Mammary epithelial cell (primary cell): ENCODE measurements at regions of chr7 and their contacts with region 1.

Region 1: DNA sequence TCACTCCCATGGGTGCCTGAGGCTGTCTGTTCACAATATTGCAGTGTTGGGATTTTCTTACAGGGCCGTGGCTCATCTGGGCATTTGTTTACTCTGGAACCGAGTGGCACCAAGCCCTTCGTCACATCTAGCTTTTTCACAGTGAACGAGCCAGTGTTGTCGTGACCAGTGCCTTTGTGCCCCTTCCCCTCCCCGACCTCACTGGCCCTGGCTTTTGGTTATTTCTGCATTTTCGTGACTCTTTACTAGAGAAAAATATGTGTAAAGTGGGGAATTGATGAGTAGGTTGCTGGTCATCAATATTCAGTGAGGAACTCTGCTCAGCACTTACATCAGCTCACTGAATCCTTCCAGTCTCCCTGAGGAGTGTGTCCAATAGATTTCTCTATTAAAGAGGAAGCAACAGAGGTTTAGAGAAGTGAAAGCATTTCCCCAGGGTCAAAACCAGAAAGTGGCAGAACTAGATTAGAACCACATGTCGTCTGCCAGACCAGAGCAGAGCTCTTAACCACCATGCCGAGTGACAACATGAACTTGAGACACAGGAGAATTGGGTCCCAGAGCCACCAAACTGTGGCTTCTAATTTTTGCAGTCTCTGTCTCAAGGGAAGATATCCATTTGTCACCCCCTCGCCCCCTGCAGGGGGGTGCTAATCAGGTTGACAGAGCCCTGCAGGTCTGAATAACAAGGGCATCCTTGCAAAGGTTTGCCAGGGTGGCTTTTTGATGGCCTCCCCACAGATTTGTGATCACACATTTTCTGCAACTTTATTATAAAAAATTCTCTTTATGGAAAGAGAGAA is 125.3 kb downstream of the CHN2 start:
- DNase-seq: no peak
- H3K4me3 ChIP-seq: no peak overlapping the region
- H3K27ac ChIP-seq: no peak overlapping the region
- H3K4me1 ChIP-seq: no peaks in the 10 kb centered on the region
- H3K27me3 ChIP-seq: no peaks in the 10 kb centered on the region
- CTCF ChIP-seq: no peak

Region 2: GRCh38 chr7:28768628-28769027 is 551.3 kb before region 1 on chr7:
- CTCF ChIA-PET with region 1: no interaction called
- dilution Hi-C with region 1: no loop called
- in situ Hi-C with region 1: no loop called
- intact Hi-C with region 1: no loop called
- DNase-seq: peak; percentile 81
- H3K4me3 ChIP-seq: no peak overlapping the region
- H3K27ac ChIP-seq: no peak overlapping the region
- H3K4me1 ChIP-seq: no peaks in the 10 kb centered on the region
- H3K27me3 ChIP-seq: no peaks in the 10 kb centered on the region
- CTCF ChIP-seq: no peak

Region 3: GRCh38 chr7:29146057-29146706 is 173.7 kb before region 1 on chr7 and contains the start of gene CPVL:
- CTCF ChIA-PET with region 1: no interaction called
- dilution Hi-C with region 1: no loop called
- in situ Hi-C with region 1: no loop called
- intact Hi-C with region 1: no loop called
- DNase-seq: no peak
- H3K4me3 ChIP-seq: peak within 1 kb of the TSS; percentile 2 to 45 (median 32)
- H3K27ac ChIP-seq: no peak within 1 kb of the TSS
- H3K4me1 ChIP-seq: peaks cover 10% of the 10 kb centered on the region
- H3K27me3 ChIP-seq: peaks cover 12% of the 10 kb centered on the region
- CTCF ChIP-seq: no peak
- total RNA-seq, gene CPVL: not detected

Region 4: GRCh38 chr7:29397398-29397797 is 77.5 kb after region 1 on chr7:
- CTCF ChIA-PET with region 1: no interaction called
- dilution Hi-C with region 1: no loop called
- in situ Hi-C with region 1: no loop called
- intact Hi-C with region 1: no loop called
- DNase-seq: no peak
- H3K4me3 ChIP-seq: no peak overlapping the region
- H3K27ac ChIP-seq: no peak overlapping the region
- H3K4me1 ChIP-seq: no peaks in the 10 kb centered on the region
- H3K27me3 ChIP-seq: peaks cover 6% of the 10 kb centered on the region
- CTCF ChIP-seq: no peak

Region 5: GRCh38 chr7:29593459-29593858 is 273.5 kb after region 1 on chr7:
- CTCF ChIA-PET with region 1: interaction called, 13 read pairs
- dilution Hi-C with region 1: no loop called
- in situ Hi-C with region 1: no loop called
- intact Hi-C with region 1: no loop called
- DNase-seq: peak; percentile 24
- H3K4me3 ChIP-seq: no peak overlapping the region
- H3K27ac ChIP-seq: no peak overlapping the region
- H3K4me1 ChIP-seq: no peaks in the 10 kb centered on the region
- H3K27me3 ChIP-seq: no peaks in the 10 kb centered on the region
- CTCF ChIP-seq: no peak